ENCODE measurements at regions of chr2 and their contacts with region 1.

Region 1: DNA sequence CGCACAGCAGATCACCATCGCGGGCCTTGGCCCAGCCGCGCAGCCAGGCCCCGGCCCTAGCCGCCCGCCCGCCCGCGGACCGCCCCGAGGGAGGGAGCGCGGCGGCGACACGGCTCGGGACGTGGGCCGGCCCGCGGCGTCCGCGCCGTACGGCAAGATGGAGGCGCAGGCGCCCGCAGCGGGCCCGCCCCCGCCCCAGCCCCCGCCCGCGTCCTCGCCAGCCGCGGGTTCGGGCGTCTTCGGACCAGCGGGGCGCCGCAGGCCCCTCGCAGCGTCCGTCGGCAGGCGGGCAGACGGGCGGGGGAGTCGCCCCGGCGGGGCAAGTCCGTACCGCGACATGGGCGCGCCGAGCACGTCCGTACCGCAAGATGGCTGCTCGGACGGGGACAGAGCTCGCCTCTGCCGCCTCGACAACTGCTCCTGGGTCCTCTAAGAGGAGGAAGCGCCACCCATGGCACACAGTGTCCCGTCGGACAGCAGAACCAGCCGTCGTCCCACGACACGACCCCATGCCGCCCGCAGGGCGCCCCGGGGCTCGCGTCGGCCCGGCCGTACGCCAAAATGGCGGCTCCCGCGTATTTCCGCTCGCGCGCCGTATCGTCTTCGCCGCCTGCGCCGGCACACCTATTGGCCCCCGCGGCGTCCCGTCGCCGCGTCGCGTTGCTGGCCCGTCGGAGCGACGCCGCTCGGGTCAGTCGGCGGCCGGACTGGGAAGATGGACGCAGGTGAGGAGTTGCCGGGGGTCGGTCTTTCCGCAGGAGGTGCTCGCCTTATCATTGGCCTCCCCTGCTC is at the starts of genes ATG4B and THAP4:
- DNase-seq: peak; percentile 90
- ATAC-seq: peak; percentile 69
- H3K4me3 Mint-ChIP-seq: peak within 1 kb of the TSS; percentile 84
- H3K27ac Mint-ChIP-seq: peak within 1 kb of the TSS; percentile 96
- H3K4me1 Mint-ChIP-seq: peaks cover 50% of the 10 kb centered on the region
- H3K27me3 Mint-ChIP-seq: no peaks in the 10 kb centered on the region
- total RNA-seq, gene ATG4B: 71.8 to 80.1 TPM
- total RNA-seq, gene THAP4: 42.5 to 54.1 TPM

Region 2: GRCh38 chr2:241102239-241102803 is 534.9 kb before region 1 on chr2 and contains the start of gene MTERF4:
- CTCF ChIA-PET with region 1: no interaction called
- POLR2A ChIA-PET with region 1: no interaction called
- intact Hi-C with region 1: loop called in 1 of 2 experiments (anchors 1 kb)
- DNase-seq: peak; percentile 94
- ATAC-seq: peak; percentile 97
- H3K4me3 Mint-ChIP-seq: peak within 1 kb of the TSS; percentile 98
- H3K27ac Mint-ChIP-seq: peak within 1 kb of the TSS; percentile 99
- H3K4me1 Mint-ChIP-seq: peaks cover 48% of the 10 kb centered on the region
- H3K27me3 Mint-ChIP-seq: no peaks in the 10 kb centered on the region
- total RNA-seq, gene MTERF4: 34.4 to 34.5 TPM

Region 3: GRCh38 chr2:241540771-241541561 is 96.2 kb before region 1 on chr2:
- CTCF ChIA-PET with region 1: no interaction called
- POLR2A ChIA-PET with region 1: no interaction called
- intact Hi-C with region 1: loop called in 1 of 2 experiments (anchors 1 kb)
- DNase-seq: peak; percentile 90
- ATAC-seq: peak; percentile 92
- H3K4me3 Mint-ChIP-seq: peak overlapping the region; percentile 31
- H3K27ac Mint-ChIP-seq: no peak overlapping the region
- H3K4me1 Mint-ChIP-seq: peaks cover 4% of the 10 kb centered on the region
- H3K27me3 Mint-ChIP-seq: peaks cover 14% of the 10 kb centered on the region

Region 4: GRCh38 chr2:241609859-241610793 is 27.1 kb before region 1 on chr2:
- CTCF ChIA-PET with region 1: interaction called, 5 read pairs
- POLR2A ChIA-PET with region 1: no interaction called
- intact Hi-C with region 1: loop called in 1 of 2 experiments (anchors 1 kb)
- DNase-seq: peak; percentile 96
- ATAC-seq: peak; percentile 100
- H3K4me3 Mint-ChIP-seq: peak overlapping the region; percentile 48
- H3K27ac Mint-ChIP-seq: peak overlapping the region; percentile 67
- H3K4me1 Mint-ChIP-seq: peaks cover 14% of the 10 kb centered on the region
- H3K27me3 Mint-ChIP-seq: no peaks in the 10 kb centered on the region

Region 5: GRCh38 chr2:241686649-241687425 is 49.6 kb after region 1 on chr2 and contains the start of gene DTYMK:
- CTCF ChIA-PET with region 1: no interaction called
- POLR2A ChIA-PET with region 1: interaction called, 3 read pairs
- intact Hi-C with region 1: loop called (anchors 1 kb)
- DNase-seq: peak; percentile 98
- ATAC-seq: peak; percentile 96
- H3K4me3 Mint-ChIP-seq: peak within 1 kb of the TSS; percentile 98
- H3K27ac Mint-ChIP-seq: peak within 1 kb of the TSS; percentile 96
- H3K4me1 Mint-ChIP-seq: peaks cover 32% of the 10 kb centered on the region
- H3K27me3 Mint-ChIP-seq: no peaks in the 10 kb centered on the region
- total RNA-seq, gene DTYMK: 79.8 to 93.1 TPM

Region 6: DNA sequence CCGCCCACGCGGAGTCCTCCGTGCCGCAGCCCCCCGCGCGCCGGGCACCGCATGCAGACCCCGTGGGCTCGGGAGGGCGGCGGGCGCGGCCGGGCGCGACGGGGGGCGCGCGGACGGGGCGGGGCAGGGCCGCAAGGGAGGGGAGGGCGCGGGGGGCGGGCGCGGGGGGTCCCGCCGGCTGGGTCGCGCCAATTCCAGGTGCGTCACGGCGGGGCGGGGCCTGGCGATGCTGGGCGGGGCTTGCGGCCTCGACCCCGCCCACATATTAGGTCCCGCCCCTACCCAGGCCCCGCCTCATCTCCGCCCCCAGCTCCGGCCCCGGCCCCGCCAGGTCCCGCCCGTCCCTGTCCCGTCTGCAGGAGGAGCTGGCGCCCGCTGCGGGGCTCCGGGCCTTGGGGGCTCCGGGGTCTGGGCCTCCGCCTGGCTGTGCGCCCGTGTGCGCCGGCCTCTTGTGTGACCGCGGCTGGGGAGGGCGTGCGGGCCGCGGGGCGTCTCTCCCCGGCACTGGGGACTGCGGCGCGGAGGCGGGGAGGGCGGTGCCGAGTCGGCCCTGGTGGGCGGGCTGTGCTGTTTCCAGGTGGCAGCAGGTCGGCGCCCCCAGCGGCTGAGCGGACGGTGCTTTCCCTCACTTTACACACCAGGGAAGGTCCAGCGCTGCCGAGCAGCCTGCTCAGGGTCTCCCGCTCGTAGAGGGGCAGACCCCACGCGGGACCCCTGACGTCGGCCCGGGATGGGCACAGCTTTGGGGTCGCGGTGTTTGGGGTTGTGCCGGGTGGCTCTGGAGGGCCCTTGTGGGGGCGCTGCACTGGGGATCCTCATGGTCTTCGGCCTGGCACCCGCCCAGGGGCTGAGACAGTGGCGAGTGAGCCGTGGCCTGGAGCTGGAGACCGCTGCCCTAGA is 65.2 kb after region 1 on chr2:
- CTCF ChIA-PET with region 1: no interaction called
- POLR2A ChIA-PET with region 1: interaction called, 9 read pairs
- intact Hi-C with region 1: loop called in 1 of 2 experiments (anchors 1 kb)
- DNase-seq: peak; percentile 94
- ATAC-seq: peak; percentile 70
- H3K4me3 Mint-ChIP-seq: peak overlapping the region; percentile 86
- H3K27ac Mint-ChIP-seq: peak overlapping the region; percentile 75
- H3K4me1 Mint-ChIP-seq: peaks cover 29% of the 10 kb centered on the region
- H3K27me3 Mint-ChIP-seq: no peaks in the 10 kb centered on the region

Region 7: DNA sequence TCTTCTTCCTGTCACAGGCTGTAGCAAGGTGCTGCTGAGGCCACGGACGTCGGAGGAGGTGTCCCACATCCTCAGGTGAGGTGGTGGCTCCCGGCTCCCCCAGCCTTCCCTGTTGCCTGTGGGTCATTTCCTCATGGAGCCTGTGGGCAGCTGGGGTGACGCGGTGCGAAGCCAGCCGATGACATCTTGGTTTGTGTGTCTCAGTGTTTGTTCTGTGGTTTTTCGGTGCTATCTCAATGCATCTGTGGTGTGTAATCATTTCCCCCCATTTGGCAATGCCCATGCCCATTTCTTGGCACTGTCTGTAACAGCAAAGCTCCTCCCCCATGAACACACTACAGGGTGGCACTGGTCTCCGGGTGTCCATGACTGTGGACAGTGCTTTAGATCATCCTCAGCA is 103.8 kb after region 1 on chr2:
- CTCF ChIA-PET with region 1: no interaction called
- POLR2A ChIA-PET with region 1: no interaction called
- intact Hi-C with region 1: no loop called
- DNase-seq: peak; percentile 54
- ATAC-seq: peak; percentile 63
- H3K4me3 Mint-ChIP-seq: no peak overlapping the region
- H3K27ac Mint-ChIP-seq: peak overlapping the region; percentile 51
- H3K4me1 Mint-ChIP-seq: peaks cover 37% of the 10 kb centered on the region
- H3K27me3 Mint-ChIP-seq: no peaks in the 10 kb centered on the region

Region 8: GRCh38 chr2:242038166-242038927 is 401.2 kb after region 1 on chr2:
- CTCF ChIA-PET with region 1: no interaction called
- POLR2A ChIA-PET with region 1: no interaction called
- intact Hi-C with region 1: no loop called
- DNase-seq: no peak
- ATAC-seq: no peak
- H3K4me3 Mint-ChIP-seq: no peak overlapping the region
- H3K27ac Mint-ChIP-seq: no peak overlapping the region
- H3K4me1 Mint-ChIP-seq: peaks cover 3% of the 10 kb centered on the region
- H3K27me3 Mint-ChIP-seq: peaks cover 5% of the 10 kb centered on the region

Region 9: DNA sequence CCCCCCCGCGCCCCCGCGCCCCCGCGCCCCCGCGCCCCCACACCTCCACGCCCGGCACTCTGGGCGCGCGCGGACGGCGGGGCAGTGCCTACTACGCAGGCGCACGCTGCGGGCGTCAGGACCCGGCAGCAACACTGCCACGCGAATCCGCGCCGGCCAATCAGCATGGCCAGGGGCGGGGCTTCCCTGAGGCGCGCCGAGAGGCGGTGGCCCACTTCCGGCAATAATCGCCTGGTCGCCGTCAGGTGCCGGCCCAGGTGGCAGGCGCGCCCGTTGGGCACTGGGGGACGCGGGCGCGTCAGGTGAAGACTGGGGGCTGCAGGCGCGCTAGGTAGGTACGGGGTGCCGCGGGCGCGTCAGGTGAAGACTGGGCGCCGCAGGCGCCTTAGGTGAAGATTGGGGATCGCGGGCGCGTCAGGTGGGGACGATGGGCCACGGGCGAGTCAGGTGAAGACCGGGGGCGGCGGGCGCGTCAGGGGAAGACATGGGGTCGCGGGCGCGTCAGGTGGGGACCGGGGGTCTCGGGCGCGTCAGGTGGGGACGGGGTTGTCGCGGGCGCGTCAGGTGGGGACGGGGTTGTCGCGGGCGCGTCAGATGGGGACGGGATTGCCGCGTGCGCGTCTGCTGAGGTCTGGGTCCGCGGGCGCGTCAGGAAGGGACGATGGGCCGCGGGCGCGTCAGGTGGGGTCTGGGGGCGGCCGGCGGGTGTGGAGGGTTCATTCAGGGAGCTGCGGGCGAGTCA is 451.4 kb after region 1 on chr2:
- CTCF ChIA-PET with region 1: no interaction called
- POLR2A ChIA-PET with region 1: no interaction called
- intact Hi-C with region 1: loop called in 1 of 2 experiments (anchors 5 kb)
- DNase-seq: peak; percentile 95
- ATAC-seq: peak; percentile 96
- H3K4me3 Mint-ChIP-seq: peak overlapping the region; percentile 82
- H3K27ac Mint-ChIP-seq: peak overlapping the region; percentile 55
- H3K4me1 Mint-ChIP-seq: peaks cover 37% of the 10 kb centered on the region
- H3K27me3 Mint-ChIP-seq: peaks cover 3% of the 10 kb centered on the region